ENCODE measurements at regions of chr3 and their contacts with region 1.

Region 1: GRCh38 chr3:172501560-172501959 is 21.7 kb downstream of the TNFSF10 start:
- DNase-seq: no peak
- H3K4me3 ChIP-seq: no peak overlapping the region
- H3K27ac ChIP-seq: no peak overlapping the region
- H3K4me1 ChIP-seq: no peaks in the 10 kb centered on the region
- H3K27me3 ChIP-seq: no peaks in the 10 kb centered on the region
- CTCF ChIP-seq: no peak
- POLR2A ChIP-seq: no peak

Region 2: DNA sequence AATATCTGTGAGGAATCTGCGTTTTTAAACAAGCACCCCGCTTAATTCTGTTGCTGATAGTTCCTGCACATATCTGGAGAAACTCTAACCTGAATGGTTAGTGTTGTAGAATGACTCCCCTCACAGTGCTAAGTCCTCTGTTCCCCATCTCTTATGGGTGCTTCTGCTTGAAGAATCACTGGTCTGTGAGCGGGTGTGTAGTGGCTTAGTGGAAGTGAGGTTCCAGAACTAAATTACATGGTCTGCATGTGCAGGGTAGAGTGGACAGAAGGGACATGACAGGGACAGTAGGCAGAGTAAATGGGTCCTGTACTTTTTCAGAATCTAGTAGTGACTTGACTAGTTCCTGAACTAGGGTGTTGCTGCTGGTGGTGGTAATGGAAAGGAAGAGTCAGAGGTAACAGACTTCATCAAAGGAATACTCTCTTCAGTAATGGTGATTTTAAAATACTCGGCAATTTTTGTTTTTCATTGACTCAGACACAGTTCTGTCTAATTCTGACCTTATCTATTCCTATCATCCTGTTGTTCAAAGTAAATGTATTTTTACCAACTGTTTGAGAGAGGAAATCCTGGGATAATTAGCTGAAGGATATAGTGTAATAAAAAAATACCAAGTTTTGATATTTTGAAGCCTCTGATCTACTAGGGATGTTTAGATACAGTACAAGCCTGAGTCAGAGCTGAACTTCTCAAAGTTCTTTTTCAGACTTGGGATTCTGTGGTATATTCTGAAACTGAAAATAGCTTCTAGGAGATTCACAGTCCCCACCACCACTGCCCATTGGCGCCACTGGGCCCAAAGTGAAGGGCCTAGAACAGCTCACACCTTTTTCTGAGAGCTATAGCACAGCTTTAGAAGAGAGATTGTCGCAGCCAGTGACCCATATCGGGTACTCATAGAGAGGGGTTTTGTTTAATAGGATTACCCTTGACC is 406.7 kb before region 1 on chr3:
- intact Hi-C with region 1: no loop called
- DNase-seq: no peak
- H3K4me3 ChIP-seq: no peak overlapping the region
- H3K27ac ChIP-seq: peak overlapping the region; percentile 14 to 42
- H3K4me1 ChIP-seq: peaks cover 0 to 5% of the 10 kb centered on the region in 2 donors
- H3K27me3 ChIP-seq: no peaks in the 10 kb centered on the region
- CTCF ChIP-seq: no peak
- POLR2A ChIP-seq: no peak

Region 3: GRCh38 chr3:172659246-172660002 is 157.9 kb after region 1 on chr3:
- intact Hi-C with region 1: loop called (anchors 5 kb)
- DNase-seq: no peak
- H3K4me3 ChIP-seq: no peak overlapping the region
- H3K27ac ChIP-seq: no peak overlapping the region
- H3K4me1 ChIP-seq: no peaks in the 10 kb centered on the region
- H3K27me3 ChIP-seq: no peaks in the 10 kb centered on the region
- CTCF ChIP-seq: no peak
- POLR2A ChIP-seq: no peak

Measured in breast epithelium (tissue), 4 donors.